AG04449 (cell line): ENCODE measurements at regions of chr16 and their contacts with region 1.

Region 1: DNA sequence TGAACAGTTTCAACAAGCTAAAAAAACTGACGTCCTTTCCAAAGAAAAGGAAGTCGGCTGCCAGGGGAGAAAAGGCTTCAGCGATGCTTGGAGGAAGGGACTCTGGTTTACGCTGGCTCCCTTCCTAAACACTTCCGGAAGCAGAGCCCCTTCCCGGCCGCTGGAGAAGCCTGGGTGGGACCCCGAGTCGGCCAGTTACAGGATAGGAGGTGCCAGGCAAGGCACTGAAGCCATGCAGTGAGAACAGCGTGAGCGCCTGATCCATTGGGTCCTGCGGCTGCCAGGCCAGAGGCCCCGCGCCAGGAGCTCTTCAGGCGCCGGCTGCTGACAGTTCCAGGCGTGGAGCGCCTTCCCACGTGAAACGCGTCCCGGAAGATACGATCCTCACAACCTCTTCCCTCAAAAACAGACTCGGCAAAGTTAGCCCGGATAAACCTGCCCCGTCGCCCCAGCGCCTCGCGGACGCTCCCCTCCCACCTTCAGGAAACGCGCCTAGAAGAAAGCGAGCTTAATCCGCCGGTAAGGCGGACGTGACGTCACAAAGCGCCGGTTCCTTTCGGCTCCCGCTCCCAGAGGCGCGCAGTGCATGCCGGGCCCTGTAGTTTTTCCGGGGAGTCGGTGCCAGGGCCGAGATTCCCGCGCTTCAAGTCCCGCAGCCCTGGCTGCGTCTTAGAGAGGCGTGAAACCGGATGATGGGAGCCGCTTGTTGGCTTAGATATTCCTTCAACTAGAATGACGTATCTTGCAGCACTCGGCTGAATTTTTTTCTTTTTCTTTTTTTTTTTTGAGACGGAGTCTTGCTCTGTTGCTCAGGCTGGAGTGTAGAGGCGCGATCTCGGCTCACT is at the start of gene ADAT1:
- DNase-seq: peak; percentile 87
- H3K4me3 ChIP-seq: peak within 1 kb of the TSS; percentile 86
- CTCF ChIP-seq: no peak

Region 2: GRCh38 chr16:75745823-75746222 is 122.8 kb after region 1 on chr16:
- CTCF ChIA-PET with region 1: no interaction called
- POLR2A ChIA-PET with region 1: no interaction called
- DNase-seq: no peak
- H3K4me3 ChIP-seq: no peak overlapping the region
- CTCF ChIP-seq: no peak

Region 3: DNA sequence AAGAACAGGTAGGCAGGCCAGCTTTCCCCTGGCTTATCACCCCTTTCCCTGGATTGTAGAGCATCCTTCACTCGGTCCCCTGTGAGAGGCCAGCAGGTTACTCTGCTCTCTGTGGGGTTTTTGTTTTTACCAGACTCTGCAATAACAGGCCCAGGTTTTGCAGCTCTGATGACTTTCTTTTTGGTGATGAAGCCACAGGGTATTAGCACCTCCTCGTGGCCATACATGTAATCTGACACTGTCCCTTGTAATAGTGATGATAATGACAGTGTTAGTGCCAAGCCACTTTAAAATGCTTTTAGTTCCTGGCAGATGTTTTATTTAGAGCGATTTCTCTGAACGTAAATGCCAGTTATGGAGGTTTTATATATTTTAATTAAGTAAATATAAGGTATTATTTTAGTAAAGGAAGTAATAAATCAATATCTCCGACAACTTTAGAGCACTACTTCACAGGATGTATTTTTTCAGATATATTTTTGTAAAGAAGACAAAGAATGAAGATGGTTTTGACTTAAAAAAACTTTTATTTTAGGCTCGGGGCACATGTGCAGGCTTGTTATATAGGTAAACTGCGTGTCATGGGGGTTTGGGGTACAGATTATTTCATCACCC is 141.3 kb after region 1 on chr16:
- CTCF ChIA-PET with region 1: interaction called, 30 read pairs
- POLR2A ChIA-PET with region 1: no interaction called
- DNase-seq: peak; percentile 24
- H3K4me3 ChIP-seq: no peak overlapping the region
- CTCF ChIP-seq: peak; percentile 69